ENCODE measurements at regions of chr5 and their contacts with region 1.

Region 1: DNA sequence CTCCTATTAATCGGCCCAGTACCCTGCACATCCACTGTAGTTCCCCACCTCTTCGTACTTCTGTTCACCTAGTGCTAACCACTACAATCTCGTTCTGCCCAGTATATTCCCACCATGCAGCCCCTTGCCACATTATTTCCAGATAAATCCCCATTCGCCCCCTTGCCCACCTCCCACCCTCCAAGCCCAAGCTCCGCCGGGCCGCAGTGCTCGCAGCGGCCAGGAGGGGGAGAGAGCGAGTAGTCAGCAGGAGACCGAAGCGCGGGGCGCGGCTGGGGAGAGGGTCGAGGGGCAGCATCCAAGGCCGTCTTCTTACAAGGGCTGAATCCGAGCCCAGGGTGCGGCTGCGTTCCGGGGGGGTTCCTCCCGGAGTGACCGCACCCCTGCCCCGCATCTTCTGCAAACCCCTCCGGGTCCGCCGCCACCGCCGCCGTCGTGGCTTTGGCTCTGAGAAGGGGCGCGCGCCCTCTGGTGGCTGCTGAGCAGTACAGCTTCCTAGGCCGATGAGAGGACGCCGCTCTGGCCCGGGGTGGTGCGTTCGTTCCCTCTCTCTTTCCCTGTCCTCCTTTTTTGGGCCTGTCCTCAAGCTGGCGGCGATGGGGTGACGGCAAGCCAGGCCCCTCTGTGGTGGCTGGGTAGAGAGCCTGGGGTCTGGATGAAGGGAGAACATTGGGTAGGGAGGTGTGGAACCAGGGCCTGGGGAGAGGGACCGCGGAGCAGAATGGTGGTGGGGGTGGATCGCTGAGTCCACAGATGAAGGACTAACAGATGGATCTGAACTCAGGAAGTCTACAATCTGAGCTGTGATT is 30.0 kb upstream of the PSD2 start:
- DNase-seq: peak; percentile 84
- ATAC-seq: peak; percentile 84
- H3K4me3 Mint-ChIP-seq: peak overlapping the region; percentile 61
- H3K27ac Mint-ChIP-seq: no peak overlapping the region
- H3K4me1 Mint-ChIP-seq: peaks cover 42% of the 10 kb centered on the region
- H3K27me3 Mint-ChIP-seq: peaks cover 52% of the 10 kb centered on the region
- CTCF ChIP-seq: peak; percentile 97

Region 2: GRCh38 chr5:139147483-139148087 is 618.0 kb before region 1 on chr5:
- CTCF ChIA-PET with region 1: no interaction called
- POLR2A ChIA-PET with region 1: no interaction called
- DNase-seq: no peak
- ATAC-seq: peak; percentile 59; the same call in 1 of the 2 replicates
- H3K4me3 Mint-ChIP-seq: no peak overlapping the region
- H3K27ac Mint-ChIP-seq: no peak overlapping the region
- H3K4me1 Mint-ChIP-seq: peaks cover 10% of the 10 kb centered on the region
- H3K27me3 Mint-ChIP-seq: no peaks in the 10 kb centered on the region
- CTCF ChIP-seq: no peak

Region 3: DNA sequence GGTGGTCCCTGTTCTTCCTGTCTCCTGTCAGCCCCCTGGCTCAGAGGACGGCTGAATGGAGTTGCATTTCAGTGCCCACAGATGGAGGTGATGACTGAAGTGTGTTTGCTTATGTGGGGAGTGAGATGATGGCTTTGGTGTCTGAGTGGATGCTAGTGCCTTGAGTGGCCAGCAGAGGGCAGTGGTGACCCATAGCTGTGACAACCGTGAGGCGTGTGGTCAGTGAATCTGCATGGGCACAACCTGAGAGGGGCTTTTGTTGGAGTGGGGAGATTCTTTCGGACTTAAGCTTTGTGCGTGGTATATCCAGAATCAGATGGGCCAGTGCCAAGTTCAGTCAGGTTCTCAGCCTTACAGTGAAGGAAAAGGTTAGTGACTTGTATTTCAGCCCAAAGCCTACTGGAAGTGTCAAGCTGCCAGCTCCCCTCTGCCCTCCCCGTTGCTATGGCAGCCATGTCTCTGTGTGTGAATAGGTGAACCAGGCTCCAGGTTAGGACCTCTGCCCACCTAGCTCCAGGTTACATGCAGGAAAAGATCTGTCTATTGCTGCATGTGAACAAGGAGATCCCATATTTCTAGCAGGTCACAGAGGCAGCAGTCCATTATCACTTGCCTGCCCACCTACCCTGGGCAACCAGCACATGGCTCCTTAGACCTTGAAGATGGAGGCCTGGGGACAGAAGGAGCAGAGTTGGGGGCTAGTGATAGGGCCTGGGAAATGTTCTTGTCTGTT is 132.2 kb before region 1 on chr5:
- CTCF ChIA-PET with region 1: interaction called, 247 read pairs
- POLR2A ChIA-PET with region 1: interaction called, 8 read pairs
- DNase-seq: peak; percentile 71
- ATAC-seq: peak; percentile 47
- H3K4me3 Mint-ChIP-seq: no peak overlapping the region
- H3K27ac Mint-ChIP-seq: no peak overlapping the region
- H3K4me1 Mint-ChIP-seq: peaks cover 41% of the 10 kb centered on the region
- H3K27me3 Mint-ChIP-seq: no peaks in the 10 kb centered on the region
- CTCF ChIP-seq: peak; percentile 94

Region 4: DNA sequence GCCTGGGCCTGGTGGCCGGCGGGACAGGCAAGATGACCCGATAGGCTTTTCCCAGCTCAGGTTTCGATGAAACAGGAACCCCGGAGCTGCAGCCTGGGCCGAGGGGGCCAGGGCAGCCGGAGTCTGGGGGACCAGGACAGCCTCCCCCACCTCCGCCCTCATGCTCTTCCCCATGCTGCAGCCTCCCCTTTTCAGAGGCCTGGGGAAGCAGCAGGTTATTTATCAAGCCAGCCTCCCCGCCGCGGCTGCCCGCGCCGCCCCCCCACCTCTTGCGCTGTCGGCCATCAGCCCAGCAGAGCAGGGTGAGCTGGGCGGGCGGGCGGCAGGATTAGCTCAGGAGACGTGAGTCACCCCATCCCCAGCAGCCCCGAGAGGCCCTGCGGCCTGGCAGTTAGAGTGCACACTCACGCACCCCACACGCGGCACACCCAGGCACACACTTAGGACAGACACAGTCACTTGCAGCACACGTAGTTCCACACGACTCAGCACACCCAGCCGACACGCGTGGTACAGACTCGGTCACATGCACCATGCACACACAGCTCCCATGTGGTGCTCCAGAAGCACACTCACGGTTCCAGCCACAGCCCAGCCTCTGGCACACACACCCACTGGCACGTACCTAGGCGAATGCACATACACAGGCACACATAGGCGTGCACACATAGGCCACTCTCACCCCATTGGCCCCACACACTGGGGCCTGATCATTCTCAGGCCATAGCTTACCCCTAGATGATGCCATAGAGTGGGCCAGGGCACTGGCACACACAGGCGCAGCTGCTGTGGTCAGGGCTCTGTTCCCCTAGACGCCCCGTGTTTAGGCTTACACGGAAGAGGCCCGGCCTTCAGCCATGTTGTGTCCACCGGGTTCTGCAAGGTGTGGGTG is 104.4 kb before region 1 on chr5:
- CTCF ChIA-PET with region 1: interaction called, 15 read pairs
- POLR2A ChIA-PET with region 1: no interaction called
- DNase-seq: no peak
- ATAC-seq: peak; percentile 6
- H3K4me3 Mint-ChIP-seq: no peak overlapping the region
- H3K27ac Mint-ChIP-seq: peak overlapping the region; percentile 90
- H3K4me1 Mint-ChIP-seq: peaks cover 72% of the 10 kb centered on the region
- H3K27me3 Mint-ChIP-seq: no peaks in the 10 kb centered on the region
- CTCF ChIP-seq: no peak

Region 5: DNA sequence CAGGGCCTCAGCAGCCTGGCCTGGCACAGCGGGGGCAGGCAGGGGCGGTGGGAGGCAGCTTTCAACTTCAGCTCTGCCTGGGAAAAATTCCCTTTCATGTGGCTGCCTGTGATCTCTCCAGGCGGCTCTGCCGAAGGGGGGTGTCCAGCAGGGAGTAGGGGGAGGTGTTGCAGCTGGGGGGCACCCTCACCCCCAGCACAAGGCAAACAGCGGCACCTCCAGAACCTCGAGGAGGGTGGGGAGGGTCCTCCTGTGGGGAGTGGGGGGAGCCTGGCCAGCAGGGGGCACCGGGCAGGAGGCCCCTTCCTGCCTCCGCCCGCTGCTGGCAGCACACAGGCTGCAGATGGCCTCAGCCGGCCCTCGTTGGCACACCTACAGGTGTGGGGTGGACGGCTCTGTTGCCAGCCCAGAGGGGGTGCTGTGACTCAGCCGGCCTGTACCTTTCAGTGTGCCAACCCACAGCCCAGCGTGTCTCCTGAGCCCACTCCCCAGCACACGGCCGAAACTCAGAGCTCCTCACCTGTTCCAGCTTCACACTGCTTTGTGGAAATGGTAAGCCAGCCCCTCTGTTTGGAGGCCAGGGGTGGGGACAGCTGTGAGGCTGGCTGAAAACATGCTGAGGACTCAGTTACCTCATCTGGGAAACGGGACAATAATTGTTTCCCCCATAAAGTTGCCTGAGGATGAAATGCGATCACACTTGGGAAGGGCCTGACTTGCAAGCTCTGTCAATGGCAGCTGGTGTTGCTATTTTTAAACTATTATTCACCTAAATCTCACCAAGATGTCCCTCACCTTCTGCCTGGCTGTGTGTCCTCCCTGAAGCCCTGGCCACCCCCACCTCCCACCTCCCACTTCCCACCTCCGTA is 80.5 kb before region 1 on chr5:
- CTCF ChIA-PET with region 1: interaction called, 77 read pairs
- POLR2A ChIA-PET with region 1: no interaction called
- DNase-seq: no peak
- ATAC-seq: no peak
- H3K4me3 Mint-ChIP-seq: no peak overlapping the region
- H3K27ac Mint-ChIP-seq: no peak overlapping the region
- H3K4me1 Mint-ChIP-seq: peaks cover 70% of the 10 kb centered on the region
- H3K27me3 Mint-ChIP-seq: no peaks in the 10 kb centered on the region
- CTCF ChIP-seq: no peak

Region 6: DNA sequence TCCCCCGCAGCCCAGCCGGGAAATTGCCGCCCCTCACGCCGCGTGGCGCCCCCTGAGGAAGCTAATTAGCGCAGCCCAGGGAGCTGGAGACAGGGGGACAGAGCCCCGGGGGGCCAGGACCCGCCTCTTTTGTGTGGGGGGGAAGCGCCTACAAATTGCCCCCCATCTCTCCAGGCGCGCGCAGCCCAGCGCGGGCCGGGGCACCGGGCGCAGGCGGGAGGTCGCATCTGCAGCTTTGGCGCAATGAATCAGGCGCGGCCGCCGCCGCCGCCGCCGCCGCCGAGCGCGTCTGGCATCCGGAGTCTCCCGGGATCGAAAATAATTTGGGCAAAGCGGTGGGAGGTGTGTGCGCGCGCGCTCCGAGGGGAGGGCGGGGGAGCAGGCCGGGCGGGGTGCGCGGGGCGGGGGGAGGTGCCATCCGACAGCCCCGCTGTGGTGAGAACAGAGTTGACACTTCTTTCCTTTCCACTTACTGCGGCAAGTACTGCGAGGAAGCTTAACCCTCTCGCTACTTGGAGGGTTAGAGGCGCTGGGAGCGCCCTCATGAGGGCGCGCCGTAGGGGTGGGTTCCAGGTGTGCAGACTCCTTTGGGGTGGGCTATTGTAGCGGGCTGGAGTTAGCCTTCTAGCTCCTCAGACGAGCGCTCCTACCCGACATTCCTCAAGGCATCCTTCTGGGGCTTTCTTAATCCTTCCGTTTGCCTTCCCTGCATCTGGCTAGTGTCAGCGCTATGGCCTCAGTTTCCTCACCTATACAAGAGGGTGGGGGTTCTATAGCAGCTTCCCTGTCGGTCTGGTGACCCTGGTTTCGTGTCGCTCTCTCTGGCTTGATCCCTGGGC is 54.3 kb before region 1 on chr5:
- CTCF ChIA-PET with region 1: interaction called, 70 read pairs
- POLR2A ChIA-PET with region 1: interaction called, 13 read pairs
- DNase-seq: peak; percentile 75
- ATAC-seq: peak; percentile 10
- H3K4me3 Mint-ChIP-seq: peak overlapping the region; percentile 71
- H3K27ac Mint-ChIP-seq: peak overlapping the region; percentile 45
- H3K4me1 Mint-ChIP-seq: peaks cover 37% of the 10 kb centered on the region
- H3K27me3 Mint-ChIP-seq: peaks cover 7% of the 10 kb centered on the region
- CTCF ChIP-seq: no peak

Region 7: GRCh38 chr5:139745800-139746690 is 19.6 kb before region 1 on chr5:
- CTCF ChIA-PET with region 1: interaction called, 99 read pairs
- POLR2A ChIA-PET with region 1: interaction called, 4 read pairs
- DNase-seq: peak; percentile 88
- ATAC-seq: peak; percentile 72
- H3K4me3 Mint-ChIP-seq: peak overlapping the region; percentile 77
- H3K27ac Mint-ChIP-seq: peak overlapping the region; percentile 93; the same call in 1 of the 2 replicates
- H3K4me1 Mint-ChIP-seq: peaks cover 52% of the 10 kb centered on the region
- H3K27me3 Mint-ChIP-seq: peaks cover 64% of the 10 kb centered on the region
- CTCF ChIP-seq: no peak